Prostate gland (tissue), 2 donors: ENCODE measurements at regions of chr7 and their contacts with region 1.

Region 1: GRCh38 chr7:151759591-151760042 is 117.3 kb downstream of the PRKAG2 start:
- DNase-seq: peak; percentile 63
- H3K4me3 ChIP-seq: no peak overlapping the region
- H3K27ac ChIP-seq: no peak overlapping the region
- H3K4me1 ChIP-seq: peaks cover 5% of the 10 kb centered on the region
- H3K27me3 ChIP-seq: no peaks in the 10 kb centered on the region
- CTCF ChIP-seq: peak; percentile 73 to 88 (median 80)
- POLR2A ChIP-seq: no peak

Region 2: GRCh38 chr7:151368136-151368571 is 391.5 kb before region 1 on chr7:
- intact Hi-C with region 1: loop called (anchors 2 kb)
- DNase-seq: peak; percentile 75
- H3K4me3 ChIP-seq: no peak overlapping the region
- H3K27ac ChIP-seq: no peak overlapping the region
- H3K4me1 ChIP-seq: no peaks in the 10 kb centered on the region
- H3K27me3 ChIP-seq: no peaks in the 10 kb centered on the region
- CTCF ChIP-seq: peak; percentile 69 to 95 (median 88)
- POLR2A ChIP-seq: no peak

Region 3: DNA sequence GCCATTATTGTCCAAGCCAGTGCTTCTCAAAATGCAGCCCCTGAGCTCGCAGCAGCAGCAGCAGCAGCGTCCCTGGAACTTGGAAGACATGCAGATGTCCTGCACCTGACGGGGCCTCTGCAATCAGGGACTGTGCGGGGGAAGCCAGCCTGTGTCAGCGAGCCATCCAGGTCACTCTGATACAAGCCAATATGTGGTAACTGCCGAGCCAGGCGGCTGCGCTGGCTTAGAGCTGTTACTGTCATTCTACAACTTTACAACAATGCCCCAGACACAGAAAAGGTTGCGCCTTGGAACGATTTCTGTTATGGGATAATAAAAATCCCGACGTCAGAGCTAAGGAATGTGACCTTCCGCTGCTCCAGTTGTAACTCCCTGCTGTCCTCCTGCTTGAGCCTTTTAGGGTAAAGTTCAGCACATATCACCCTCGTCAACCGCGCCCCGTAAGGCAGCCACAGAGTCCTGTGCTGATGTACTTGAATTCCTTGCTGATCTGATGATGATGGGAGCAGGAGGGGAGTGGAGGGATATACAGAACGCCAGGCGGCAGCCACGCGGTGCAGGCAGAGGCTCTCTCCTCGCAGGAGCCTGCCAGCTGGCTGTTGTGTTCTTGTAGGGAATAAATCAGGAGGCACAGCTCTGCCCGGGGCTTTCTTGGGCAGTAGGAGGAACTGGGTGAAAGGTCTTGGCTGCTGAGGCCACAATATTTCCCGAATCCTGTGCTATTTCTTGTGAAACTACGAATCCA is 299.7 kb before region 1 on chr7:
- intact Hi-C with region 1: loop called (anchors 5 kb)
- DNase-seq: peak; percentile 87
- H3K4me3 ChIP-seq: peak overlapping the region in 1 of 2 donors; percentile 2
- H3K27ac ChIP-seq: peak overlapping the region; percentile 76 to 81
- H3K4me1 ChIP-seq: peaks cover 5% of the 10 kb centered on the region
- H3K27me3 ChIP-seq: no peaks in the 10 kb centered on the region
- CTCF ChIP-seq: peak in 3 of 4 experiments; percentile 29 to 48 (median 45)
- POLR2A ChIP-seq: no peak

Region 4: GRCh38 chr7:151519765-151520418 is 239.7 kb before region 1 on chr7 and contains the start of gene RHEB:
- intact Hi-C with region 1: loop called (anchors 5 kb)
- DNase-seq: peak; percentile 98
- H3K4me3 ChIP-seq: peak within 1 kb of the TSS; percentile 95 to 97
- H3K27ac ChIP-seq: peak within 1 kb of the TSS; percentile 98 to 99
- H3K4me1 ChIP-seq: peaks cover 3% of the 10 kb centered on the region
- H3K27me3 ChIP-seq: no peaks in the 10 kb centered on the region
- CTCF ChIP-seq: no peak
- POLR2A ChIP-seq: peak; percentile 59
- total RNA-seq, gene RHEB: 59.3 to 63.1 TPM

Region 5: GRCh38 chr7:151566897-151567320 is 192.7 kb before region 1 on chr7:
- intact Hi-C with region 1: loop called (anchors 5 kb)
- DNase-seq: peak; percentile 69
- H3K4me3 ChIP-seq: no peak overlapping the region
- H3K27ac ChIP-seq: peak overlapping the region; percentile 55 to 57
- H3K4me1 ChIP-seq: no peaks in the 10 kb centered on the region
- H3K27me3 ChIP-seq: no peaks in the 10 kb centered on the region
- CTCF ChIP-seq: no peak
- POLR2A ChIP-seq: no peak

Region 6: GRCh38 chr7:151626422-151627115 is 133.0 kb before region 1 on chr7:
- intact Hi-C with region 1: loop called (anchors 5 kb)
- DNase-seq: peak; percentile 48
- H3K4me3 ChIP-seq: no peak overlapping the region
- H3K27ac ChIP-seq: peak overlapping the region in 1 of 2 donors; percentile 39
- H3K4me1 ChIP-seq: peaks cover 3% of the 10 kb centered on the region
- H3K27me3 ChIP-seq: no peaks in the 10 kb centered on the region
- CTCF ChIP-seq: peak in 2 of 4 experiments; percentile 52 to 67
- POLR2A ChIP-seq: no peak

Region 7: DNA sequence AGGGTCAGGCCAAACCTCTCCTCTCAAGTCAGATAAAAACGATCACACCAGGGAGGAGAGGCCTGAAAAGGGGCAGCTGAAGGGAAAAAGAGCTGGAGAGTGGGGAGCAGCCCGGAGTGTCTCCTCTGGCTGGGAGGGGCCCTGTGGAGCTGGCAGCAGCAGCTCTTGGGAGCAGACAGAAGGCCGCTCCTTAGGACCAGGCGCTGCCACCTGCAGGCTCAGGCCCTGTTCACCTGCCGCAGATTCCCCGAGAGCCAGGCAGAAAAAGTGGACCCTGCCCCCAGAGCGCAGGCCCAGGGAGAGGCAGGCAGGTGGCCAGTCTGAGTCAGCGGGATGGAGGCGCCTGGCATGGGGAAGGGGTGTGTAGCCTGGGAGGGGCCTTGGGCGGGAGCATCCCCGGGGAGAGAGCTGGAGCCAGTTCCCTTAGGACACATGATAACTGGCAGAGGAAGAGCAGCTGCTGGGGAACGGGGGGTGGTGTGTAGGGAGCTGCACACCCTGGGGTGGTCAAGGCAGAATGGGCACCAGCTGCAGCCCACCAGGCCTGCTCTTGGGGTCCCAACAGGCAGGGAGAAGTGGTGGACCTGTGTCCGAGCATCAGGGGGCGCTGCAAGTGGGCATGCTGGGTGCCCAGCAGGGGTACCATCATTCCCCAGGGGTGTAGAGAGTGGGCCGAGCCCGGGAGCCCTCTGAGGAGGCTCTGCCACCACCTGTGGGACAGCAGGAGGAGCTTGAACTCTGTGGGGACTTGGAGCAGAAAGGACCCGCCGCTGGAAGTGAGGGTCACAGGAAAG is 62.7 kb before region 1 on chr7:
- intact Hi-C with region 1: loop called (anchors 5 kb)
- DNase-seq: peak; percentile 35
- H3K4me3 ChIP-seq: no peak overlapping the region
- H3K27ac ChIP-seq: peak overlapping the region; percentile 75 to 77
- H3K4me1 ChIP-seq: peaks cover 12% of the 10 kb centered on the region
- H3K27me3 ChIP-seq: no peaks in the 10 kb centered on the region
- CTCF ChIP-seq: peak in 2 of 4 experiments; percentile 10 to 27
- POLR2A ChIP-seq: no peak

Region 8: DNA sequence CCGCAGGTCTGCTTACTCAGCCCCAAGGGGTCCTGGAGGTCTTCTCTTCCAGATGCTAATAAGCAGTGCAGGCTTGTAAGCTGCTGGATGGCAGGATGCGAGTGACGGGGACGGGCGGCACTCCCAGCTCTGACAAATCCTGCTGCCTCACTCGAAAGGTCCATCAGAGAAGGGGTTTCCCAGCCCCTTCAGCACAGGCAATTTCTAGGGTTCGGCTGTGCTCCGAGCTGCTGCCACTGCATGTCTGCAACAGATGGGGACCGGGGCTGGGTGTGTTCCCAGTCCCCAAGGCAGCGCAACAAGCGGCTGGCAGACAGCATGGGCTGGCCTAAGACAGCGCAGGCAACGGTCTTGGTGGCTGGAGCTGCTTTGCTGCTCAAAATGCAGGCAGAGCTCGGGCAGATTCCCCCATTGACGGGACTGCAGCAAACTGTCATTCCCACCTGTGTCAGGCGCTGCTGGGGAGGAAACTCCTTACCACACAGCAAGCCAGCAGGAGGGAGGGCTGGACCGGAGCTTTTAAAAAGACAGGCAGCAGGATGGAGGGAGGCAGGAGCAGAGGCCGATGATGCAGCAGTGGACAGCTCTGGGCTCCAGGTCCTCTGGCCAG is 54.9 kb after region 1 on chr7:
- intact Hi-C with region 1: no loop called
- DNase-seq: no peak
- H3K4me3 ChIP-seq: no peak overlapping the region
- H3K27ac ChIP-seq: no peak overlapping the region
- H3K4me1 ChIP-seq: peaks cover 3% of the 10 kb centered on the region
- H3K27me3 ChIP-seq: no peaks in the 10 kb centered on the region
- CTCF ChIP-seq: no peak
- POLR2A ChIP-seq: no peak